ENCODE measurements at regions of chr19 and their contacts with region 1.

Region 1: GRCh38 chr19:771332-771785 is 20.4 kb downstream of the MISP start:
- DNase-seq: no peak
- H3K4me3 ChIP-seq: no peak overlapping the region
- H3K27ac ChIP-seq: no peak overlapping the region
- H3K27me3 ChIP-seq: no peaks in the 10 kb centered on the region
- CTCF ChIP-seq: peak in 42 of 56 donors; percentile 11 to 47 (median 30)

Region 2: DNA sequence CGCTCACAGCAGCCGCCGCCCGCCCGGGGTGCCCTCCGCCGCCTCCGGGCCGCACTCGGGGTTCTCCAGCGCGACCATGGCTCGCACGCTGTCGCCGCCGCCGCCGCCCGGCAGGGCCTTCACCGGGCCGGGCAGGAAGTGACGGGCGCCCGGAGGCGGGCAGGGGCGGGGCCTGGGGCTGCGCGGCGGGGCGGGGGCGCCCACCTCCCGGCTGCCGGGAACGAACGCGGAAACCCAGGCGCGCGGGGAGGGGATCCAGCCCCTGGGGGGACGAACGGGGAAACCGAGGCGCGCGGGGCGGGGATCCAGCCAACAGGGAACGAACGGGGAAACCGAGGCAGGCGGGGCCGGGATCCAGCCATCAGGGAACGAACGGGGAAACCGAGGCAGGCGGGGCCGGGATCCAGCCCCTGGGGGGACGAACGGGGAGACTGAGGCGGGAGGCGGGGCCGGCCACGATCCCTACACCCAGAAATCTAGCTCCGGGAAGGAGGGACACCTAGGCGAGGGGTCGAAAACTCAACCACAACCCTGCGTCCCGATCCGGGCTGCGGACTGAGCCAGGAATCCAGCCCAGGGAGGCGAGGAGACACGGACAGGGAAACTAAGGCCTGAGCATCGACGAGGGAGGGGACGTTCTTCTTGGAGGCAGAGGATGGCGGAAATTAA is 141.9 kb after region 1 on chr19 and contains the start of gene R3HDM4:
- intact Hi-C with region 1: loop called in 1 of 2 experiments (anchors 2 kb)
- DNase-seq: peak; percentile 48 to 88 (median 74)
- H3K4me3 ChIP-seq: peak within 1 kb of the TSS; percentile 55 to 95 (median 85)
- H3K27ac ChIP-seq: peak within 1 kb of the TSS in 57 of 59 donors; percentile 34 to 94 (median 82)
- H3K27me3 ChIP-seq: peaks cover 0 to 18% (median 12%) of the 10 kb centered on the region in 45 donors
- CTCF ChIP-seq: no peak
- total RNA-seq, gene R3HDM4: 26.1 to 60.5 (median 37.5) TPM

Region 3: DNA sequence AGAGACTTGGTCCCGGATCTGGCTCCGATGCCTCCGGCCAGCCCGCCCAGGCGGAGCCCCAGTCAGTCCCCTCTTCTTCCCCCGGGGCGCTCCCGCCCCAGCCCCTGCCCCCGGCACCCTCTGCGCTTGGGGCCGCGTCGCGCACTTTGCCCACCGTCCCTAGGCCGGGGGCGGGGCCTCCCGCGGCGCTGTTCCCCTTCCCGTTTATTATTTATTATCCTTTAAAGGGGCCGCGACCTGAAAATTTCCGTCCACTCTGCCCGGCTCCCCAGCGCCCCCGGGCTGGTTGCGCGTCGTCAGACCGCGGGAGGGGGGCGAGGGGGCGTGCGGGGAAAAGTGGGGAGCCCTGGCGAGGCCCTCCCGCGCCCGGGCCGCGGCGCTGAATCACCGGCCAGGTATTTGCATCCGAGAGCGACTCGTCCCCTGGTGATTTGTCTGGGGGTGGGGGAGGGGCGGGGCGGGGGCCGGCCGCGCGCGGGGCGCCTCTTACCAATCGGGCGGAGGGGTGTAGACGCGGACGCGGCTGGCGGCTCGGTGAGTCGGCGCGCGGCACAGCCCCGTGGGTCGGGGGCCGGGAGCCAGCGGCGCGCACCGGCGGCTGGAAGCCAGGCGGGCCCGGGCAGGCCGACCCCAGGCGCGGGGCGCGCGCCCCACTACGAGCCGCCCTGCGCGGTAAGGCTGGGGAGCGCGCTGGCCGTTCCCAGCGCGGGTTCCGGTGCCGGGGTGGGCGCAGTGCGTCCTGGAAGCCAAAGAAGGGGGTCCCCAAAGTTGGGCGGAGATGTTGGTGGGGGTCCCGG is 154.4 kb after region 1 on chr19 and contains the start of gene ARID3A:
- intact Hi-C with region 1: loop called in 1 of 2 experiments (anchors 5 kb)
- DNase-seq: peak; percentile 69 to 86 (median 76)
- H3K4me3 ChIP-seq: peak within 1 kb of the TSS; percentile 65 to 95 (median 82)
- H3K27ac ChIP-seq: peak within 1 kb of the TSS in 57 of 59 donors; percentile 29 to 88 (median 77)
- H3K27me3 ChIP-seq: peaks cover 0 to 8% (median 6%) of the 10 kb centered on the region in 45 donors
- CTCF ChIP-seq: peak in 23 of 56 donors; percentile 4 to 51 (median 15)
- total RNA-seq, gene ARID3A: 3.8 to 17.6 (median 8.7) TPM

Region 4: DNA sequence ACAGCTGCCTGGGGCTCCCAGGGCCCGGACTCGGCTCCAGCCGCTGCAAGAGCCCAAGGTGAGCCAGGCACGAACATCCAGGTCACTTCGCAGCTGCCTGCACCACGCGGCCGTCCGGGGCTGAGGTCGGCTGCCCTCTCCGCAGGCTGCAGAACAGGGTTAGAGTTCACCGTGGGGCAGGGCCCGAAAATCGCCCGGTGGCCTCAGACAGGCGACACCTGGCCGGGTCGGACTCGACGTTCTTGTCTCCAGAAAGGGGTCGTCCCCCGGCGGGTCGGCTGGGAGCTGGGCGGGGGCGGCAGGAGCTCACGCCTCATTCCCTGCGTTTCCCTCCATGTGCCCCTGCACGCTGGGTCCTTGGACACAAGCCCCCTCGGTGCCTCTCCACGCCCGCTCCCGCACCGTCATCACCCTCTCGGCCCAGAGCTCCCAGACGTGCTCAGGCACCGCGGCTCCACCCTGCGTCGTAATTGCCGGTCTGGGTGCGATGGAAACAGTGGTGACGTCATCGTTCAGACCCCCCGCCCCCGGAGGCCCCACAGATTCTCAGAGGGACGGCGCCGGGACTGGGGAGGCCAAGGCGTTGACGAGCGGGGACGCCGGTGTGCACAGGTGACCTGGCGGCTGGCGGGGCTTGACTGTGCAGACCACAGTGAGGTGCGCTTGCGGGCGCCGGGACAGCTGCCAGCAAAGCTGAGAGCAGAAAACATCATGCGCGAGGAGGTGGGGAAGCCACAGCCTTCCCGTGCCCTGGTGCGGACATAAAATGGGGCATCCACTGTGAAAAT is 224.9 kb after region 1 on chr19:
- intact Hi-C with region 1: loop called in 1 of 2 experiments (anchors 10 kb)
- DNase-seq: peak in 1 of 10 donors; percentile 24
- H3K4me3 ChIP-seq: peak overlapping the region in 2 of 59 donors; percentile 0 to 20
- H3K27ac ChIP-seq: no peak overlapping the region
- H3K27me3 ChIP-seq: peaks cover 0 to 58% (median 41%) of the 10 kb centered on the region in 45 donors
- CTCF ChIP-seq: no peak

Measured in dorsolateral prefrontal cortex (tissue), 120 donors.